Activated CD4-positive, alpha-beta T cell treated with anti-CD3 and anti-CD28 coated beads, Interleukin-2, amount 10 ng/mL, durations not matched to agents 24 days and 14 days (primary cell): ENCODE measurements at regions of chr2 and their contacts with region 1.

Region 1: DNA sequence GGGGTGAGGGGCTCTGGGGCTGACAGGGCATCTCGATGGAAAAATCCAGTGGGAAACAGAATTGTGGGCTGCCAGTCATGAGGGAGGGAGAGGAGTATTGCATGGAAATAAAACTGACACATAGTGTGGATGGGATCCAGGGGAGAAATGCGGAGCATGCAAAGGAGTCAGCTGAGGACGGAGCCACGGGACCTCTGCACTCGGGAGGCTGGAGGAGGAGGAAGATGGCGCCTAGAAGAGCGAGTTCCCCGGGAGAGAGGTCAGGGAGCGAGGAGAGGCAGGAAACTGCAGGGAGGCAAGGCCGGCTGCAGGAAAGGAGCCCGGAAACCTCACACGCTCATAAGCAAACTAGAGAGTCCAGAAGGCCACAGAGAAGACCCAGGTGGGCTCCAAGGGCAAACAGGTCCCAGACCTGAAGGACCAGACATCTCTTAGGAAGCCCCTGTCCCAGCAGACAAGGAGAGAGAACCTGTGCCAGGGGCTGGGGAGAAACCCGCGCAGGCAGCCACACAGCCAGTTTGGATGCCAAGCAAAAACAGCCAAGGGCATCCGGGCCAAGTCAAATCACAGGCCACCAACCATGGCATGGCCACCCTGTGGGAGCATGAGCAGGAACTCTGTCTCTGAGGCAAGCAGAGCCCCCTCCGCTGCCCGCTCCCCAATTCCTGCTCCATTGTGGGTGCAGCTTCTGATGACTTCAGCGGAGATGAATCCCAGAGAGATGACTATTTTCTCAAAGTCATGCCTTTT is 218.8 kb upstream of the ID2 start:
- DNase-seq: no peak
- H3K4me3 Mint-ChIP-seq: no peak overlapping the region
- H3K27ac Mint-ChIP-seq: no peak overlapping the region
- H3K4me1 Mint-ChIP-seq: peaks cover 31% of the 10 kb centered on the region
- H3K27me3 Mint-ChIP-seq: peaks cover 5% of the 10 kb centered on the region

Region 2: GRCh38 chr2:7725171-7725849 is 737.8 kb before region 1 on chr2:
- intact Hi-C with region 1: no loop called
- DNase-seq: peak; percentile 88
- H3K4me3 Mint-ChIP-seq: peak overlapping the region; percentile 87
- H3K27ac Mint-ChIP-seq: peak overlapping the region; percentile 92
- H3K4me1 Mint-ChIP-seq: peaks cover 53% of the 10 kb centered on the region
- H3K27me3 Mint-ChIP-seq: no peaks in the 10 kb centered on the region

Region 3: DNA sequence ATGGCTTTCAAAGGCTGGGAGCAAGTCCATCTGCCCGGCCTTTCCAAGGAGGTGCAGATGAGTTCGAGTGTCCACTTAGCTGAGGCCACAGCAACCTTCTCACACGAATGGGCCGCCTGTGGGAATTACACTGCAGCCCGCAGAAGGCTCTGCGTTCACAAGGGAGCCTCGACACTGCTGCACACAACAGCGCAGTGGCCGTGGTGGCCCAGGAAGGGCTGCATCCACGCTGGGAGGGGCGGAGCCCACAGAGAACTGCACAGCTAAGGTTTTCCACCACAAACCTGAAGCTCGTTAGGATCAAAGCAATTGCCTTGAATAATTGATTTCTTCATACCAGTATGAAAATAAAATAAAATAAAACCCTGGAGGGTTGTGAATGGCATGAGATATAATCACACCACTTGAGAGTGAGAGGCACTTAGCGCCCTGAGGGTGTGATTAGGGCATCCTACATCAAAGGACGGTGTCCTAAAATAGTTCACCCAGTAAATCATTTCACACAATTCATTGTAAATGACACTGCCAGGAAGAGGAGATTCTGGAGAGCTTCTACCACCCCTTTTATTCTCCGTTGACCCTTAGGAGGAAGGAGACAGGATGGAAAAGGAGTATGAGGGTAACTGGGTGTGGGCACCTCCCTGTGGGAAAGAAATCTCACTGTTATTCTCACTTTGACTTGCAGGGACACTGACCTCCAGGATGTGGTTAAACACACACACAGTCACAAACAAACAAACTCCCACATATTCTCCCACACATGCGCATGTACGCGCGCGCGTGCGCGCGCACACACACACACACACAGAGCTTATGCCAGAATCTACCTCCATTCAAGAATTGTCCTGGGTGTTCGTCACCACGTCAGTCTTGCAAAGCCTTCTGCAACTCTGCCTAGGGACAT is 37.8 kb before region 1 on chr2:
- intact Hi-C with region 1: loop called (anchors 5 kb)
- DNase-seq: peak; percentile 73
- H3K4me3 Mint-ChIP-seq: no peak overlapping the region
- H3K27ac Mint-ChIP-seq: peak overlapping the region; percentile 85
- H3K4me1 Mint-ChIP-seq: peaks cover 23% of the 10 kb centered on the region
- H3K27me3 Mint-ChIP-seq: peaks cover 11% of the 10 kb centered on the region